Ascending aorta (tissue), 2 donors: ENCODE measurements at regions of chr1 and their contacts with region 1.

Region 1: DNA sequence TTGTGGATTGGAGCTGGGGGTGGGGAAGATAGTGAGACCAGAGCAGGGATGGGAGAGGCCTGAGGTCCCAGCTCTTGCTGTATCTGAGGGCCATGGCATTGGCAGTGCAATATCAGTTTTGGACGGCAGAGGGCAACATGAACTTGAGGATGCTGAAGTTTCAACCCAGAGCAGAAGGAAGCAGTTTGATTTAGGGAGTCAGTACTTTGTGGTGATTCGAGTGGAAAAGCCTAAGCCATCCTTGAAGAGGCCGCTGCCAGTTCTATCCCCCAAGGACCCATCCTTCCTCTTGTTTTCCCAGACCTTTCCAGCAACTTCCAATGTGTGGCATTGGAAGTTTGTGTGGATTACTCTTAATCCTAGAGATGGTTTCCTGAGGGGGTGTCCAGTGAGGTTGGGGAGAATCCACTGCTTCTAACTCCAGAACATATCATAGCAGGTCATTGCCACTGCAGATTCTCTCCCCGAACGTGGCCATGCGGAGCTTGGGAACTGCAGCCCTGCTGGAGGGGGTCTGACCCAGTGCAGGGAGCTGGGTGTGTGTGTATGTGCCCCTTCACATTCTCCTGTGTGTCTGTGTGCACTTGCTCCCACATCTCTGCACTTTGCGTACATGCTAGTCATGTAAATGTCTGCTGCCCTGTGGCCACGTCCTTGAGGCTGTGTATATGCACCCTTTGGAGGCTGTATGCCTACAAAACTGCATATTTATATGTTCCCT is 24.1 kb downstream of the SLC26A9 start:
- DNase-seq: peak; percentile 33 to 91
- H3K4me3 ChIP-seq: no peak overlapping the region
- H3K27ac ChIP-seq: peak overlapping the region; percentile 72 to 73
- H3K4me1 ChIP-seq: peaks cover 22 to 60% of the 10 kb centered on the region in 2 donors
- H3K27me3 ChIP-seq: no peaks in the 10 kb centered on the region
- CTCF ChIP-seq: peak; percentile 84 to 95 (median 90)

Region 2: DNA sequence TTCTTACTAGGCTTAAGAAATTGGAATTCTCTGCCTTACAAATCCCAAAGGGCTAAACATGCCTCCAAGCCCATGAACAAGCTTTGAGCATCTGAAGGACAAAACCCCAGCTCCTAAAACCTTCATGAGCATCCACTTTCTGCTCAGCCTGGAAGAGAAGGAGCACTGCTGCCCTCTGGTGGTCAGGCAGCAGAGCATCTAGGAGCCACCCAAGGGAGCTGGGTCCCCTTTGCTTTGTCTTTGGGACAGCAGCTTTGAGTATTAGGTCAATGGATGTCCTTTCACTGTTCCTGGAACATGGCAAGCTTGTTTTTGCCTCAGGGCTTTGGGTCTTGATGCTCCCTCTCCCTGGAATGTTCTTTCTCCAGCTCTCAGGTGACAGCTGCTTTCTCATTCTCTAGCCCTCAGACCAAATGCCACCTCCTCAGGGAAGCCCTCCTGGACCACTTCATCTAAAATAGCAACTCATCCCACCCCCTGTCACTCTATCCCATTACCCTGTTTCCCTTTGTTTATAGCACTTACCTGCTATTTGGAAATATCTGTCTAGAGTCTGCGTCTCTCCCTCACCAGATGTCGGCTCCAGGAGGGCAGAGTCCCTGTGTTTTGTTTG is 58.3 kb after region 1 on chr1:
- intact Hi-C with region 1: loop called (anchors 1 kb)
- DNase-seq: peak in 1 of 2 donors; percentile 75
- H3K4me3 ChIP-seq: no peak overlapping the region
- H3K27ac ChIP-seq: no peak overlapping the region
- H3K4me1 ChIP-seq: peaks cover 0 to 7% of the 10 kb centered on the region in 2 donors
- H3K27me3 ChIP-seq: no peaks in the 10 kb centered on the region
- CTCF ChIP-seq: peak; percentile 90 to 97 (median 93)

Region 3: GRCh38 chr1:206066479-206067171 is 147.4 kb after region 1 on chr1:
- intact Hi-C with region 1: no loop called
- DNase-seq: no peak
- H3K4me3 ChIP-seq: no peak overlapping the region
- H3K27ac ChIP-seq: no peak overlapping the region
- H3K4me1 ChIP-seq: no peaks in the 10 kb centered on the region
- H3K27me3 ChIP-seq: no peaks in the 10 kb centered on the region
- CTCF ChIP-seq: no peak

Region 4: GRCh38 chr1:206100346-206100745 is 181.2 kb after region 1 on chr1:
- intact Hi-C with region 1: no loop called
- DNase-seq: no peak
- H3K4me3 ChIP-seq: no peak overlapping the region
- H3K27ac ChIP-seq: no peak overlapping the region
- H3K4me1 ChIP-seq: no peaks in the 10 kb centered on the region
- H3K27me3 ChIP-seq: no peaks in the 10 kb centered on the region
- CTCF ChIP-seq: no peak